Endothelial cell of umbilical vein (primary cell): ENCODE measurements at regions of chr14 and their contacts with region 1.

Region 1: GRCh38 chr14:24114536-24115450 is at the starts of genes DCAF11 and NRL:
- DNase-seq: peak; percentile 100
- H3K4me3 ChIP-seq: peak within 1 kb of the TSS; percentile 46 to 92 (median 84)
- H3K27ac ChIP-seq: peak within 1 kb of the TSS; percentile 88
- H3K4me1 ChIP-seq: peaks cover 13% of the 10 kb centered on the region
- H3K27me3 ChIP-seq: no peaks in the 10 kb centered on the region
- CTCF ChIP-seq: no peak
- POLR2A ChIP-seq: peak; percentile 39
- total RNA-seq, gene DCAF11: 32.1 and 38.5 TPM in 2 replicates
- total RNA-seq, gene NRL: 0.62 and 0.71 TPM in 2 replicates

Region 2: GRCh38 chr14:24013654-24014514 is 100.9 kb before region 1 on chr14:
- CTCF ChIA-PET with region 1: no interaction called
- POLR2A ChIA-PET with region 1: no interaction called
- dilution Hi-C with region 1: no loop called
- intact Hi-C with region 1: loop called (anchors 1 kb)
- DNase-seq: peak; percentile 82
- H3K4me3 ChIP-seq: no peak overlapping the region
- H3K27ac ChIP-seq: no peak overlapping the region
- H3K4me1 ChIP-seq: peaks cover 3% of the 10 kb centered on the region
- H3K27me3 ChIP-seq: peaks cover 0 to 2% of the 10 kb centered on the region in 2 experiments
- CTCF ChIP-seq: peak; percentile 64 to 72
- POLR2A ChIP-seq: no peak

Region 3: DNA sequence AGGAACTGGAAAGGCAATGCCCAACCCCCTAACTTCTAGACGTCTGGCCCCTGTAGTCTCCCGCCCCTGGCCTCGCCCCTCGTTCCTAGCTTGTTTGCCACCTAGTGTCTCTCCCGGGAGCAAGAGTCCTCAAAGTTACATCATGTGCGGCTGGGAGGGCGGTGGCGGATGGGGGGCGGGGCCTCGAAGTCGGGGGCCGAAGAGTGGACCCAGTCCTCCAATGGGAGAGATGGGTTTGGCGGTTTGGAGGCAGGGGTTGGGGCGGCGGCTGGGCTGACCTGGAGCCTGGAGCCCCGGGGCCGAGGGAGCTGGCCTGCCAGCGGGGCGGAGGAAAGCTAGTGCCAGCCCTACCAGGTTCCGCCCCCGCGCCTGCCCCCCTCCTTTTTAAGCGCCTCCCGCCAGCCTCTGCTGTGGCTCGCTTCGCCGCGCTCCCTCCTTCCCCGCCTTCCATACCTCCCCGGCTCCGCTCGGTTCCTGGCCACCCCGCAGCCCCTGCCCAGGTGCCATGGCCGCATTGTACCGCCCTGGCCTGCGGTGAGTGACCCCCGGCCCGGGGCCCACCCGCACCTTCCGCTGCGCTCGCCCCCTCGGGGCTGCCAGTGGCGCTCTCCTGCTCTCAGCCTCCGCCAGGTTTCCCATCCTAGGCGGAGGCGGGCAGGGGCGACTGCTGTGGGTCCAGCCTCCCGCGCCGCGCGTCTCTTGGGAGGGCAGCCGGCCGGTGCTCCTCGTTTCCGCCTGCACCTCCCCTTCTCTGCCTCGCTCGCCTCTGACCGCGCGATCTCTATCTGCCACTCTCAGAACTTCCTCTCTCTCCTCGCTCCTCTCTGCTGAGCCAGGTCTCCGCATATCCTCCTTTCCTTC is 20.7 kb before region 1 on chr14 and contains the start of gene PCK2:
- CTCF ChIA-PET with region 1: interaction called, 126 read pairs
- POLR2A ChIA-PET with region 1: interaction called, 11 read pairs
- dilution Hi-C with region 1: no loop called
- intact Hi-C with region 1: loop called (anchors 1 kb)
- DNase-seq: peak; percentile 72
- H3K4me3 ChIP-seq: peak within 1 kb of the TSS; percentile 71 to 82 (median 74)
- H3K27ac ChIP-seq: peak within 1 kb of the TSS; percentile 46
- H3K4me1 ChIP-seq: peaks cover 9% of the 10 kb centered on the region
- H3K27me3 ChIP-seq: no peaks in the 10 kb centered on the region
- CTCF ChIP-seq: peak in 1 of 2 donors; percentile 9
- POLR2A ChIP-seq: peak; percentile 77
- total RNA-seq, gene PCK2: 24.5 and 25.1 TPM in 2 replicates

Region 4: GRCh38 chr14:24141097-24141880 is 26.5 kb after region 1 on chr14 and contains the start of gene EMC9:
- CTCF ChIA-PET with region 1: interaction called, 11 read pairs
- POLR2A ChIA-PET with region 1: interaction called, 13 read pairs
- dilution Hi-C with region 1: no loop called
- intact Hi-C with region 1: loop called (anchors 1 kb)
- DNase-seq: peak; percentile 100
- H3K4me3 ChIP-seq: peak within 1 kb of the TSS; percentile 79 to 99 (median 81)
- H3K27ac ChIP-seq: peak within 1 kb of the TSS; percentile 42
- H3K4me1 ChIP-seq: peaks cover 24% of the 10 kb centered on the region
- H3K27me3 ChIP-seq: no peaks in the 10 kb centered on the region
- CTCF ChIP-seq: peak; percentile 28 to 53
- POLR2A ChIP-seq: peak; percentile 78
- total RNA-seq, gene EMC9: 19.0 and 21.8 TPM in 2 replicates

Region 5: GRCh38 chr14:24188251-24189058 is 73.7 kb after region 1 on chr14 and contains the start of gene IPO4:
- CTCF ChIA-PET with region 1: no interaction called
- POLR2A ChIA-PET with region 1: no interaction called
- dilution Hi-C with region 1: no loop called
- intact Hi-C with region 1: loop called (anchors 2 kb)
- DNase-seq: peak; percentile 94
- H3K4me3 ChIP-seq: peak within 1 kb of the TSS; percentile 31 to 65 (median 37)
- H3K27ac ChIP-seq: peak within 1 kb of the TSS; percentile 45
- H3K4me1 ChIP-seq: peaks cover 6% of the 10 kb centered on the region
- H3K27me3 ChIP-seq: no peaks in the 10 kb centered on the region
- CTCF ChIP-seq: no peak
- POLR2A ChIP-seq: peak; percentile 94
- total RNA-seq, gene IPO4: 52.6 and 66.5 TPM in 2 replicates

Region 6: DNA sequence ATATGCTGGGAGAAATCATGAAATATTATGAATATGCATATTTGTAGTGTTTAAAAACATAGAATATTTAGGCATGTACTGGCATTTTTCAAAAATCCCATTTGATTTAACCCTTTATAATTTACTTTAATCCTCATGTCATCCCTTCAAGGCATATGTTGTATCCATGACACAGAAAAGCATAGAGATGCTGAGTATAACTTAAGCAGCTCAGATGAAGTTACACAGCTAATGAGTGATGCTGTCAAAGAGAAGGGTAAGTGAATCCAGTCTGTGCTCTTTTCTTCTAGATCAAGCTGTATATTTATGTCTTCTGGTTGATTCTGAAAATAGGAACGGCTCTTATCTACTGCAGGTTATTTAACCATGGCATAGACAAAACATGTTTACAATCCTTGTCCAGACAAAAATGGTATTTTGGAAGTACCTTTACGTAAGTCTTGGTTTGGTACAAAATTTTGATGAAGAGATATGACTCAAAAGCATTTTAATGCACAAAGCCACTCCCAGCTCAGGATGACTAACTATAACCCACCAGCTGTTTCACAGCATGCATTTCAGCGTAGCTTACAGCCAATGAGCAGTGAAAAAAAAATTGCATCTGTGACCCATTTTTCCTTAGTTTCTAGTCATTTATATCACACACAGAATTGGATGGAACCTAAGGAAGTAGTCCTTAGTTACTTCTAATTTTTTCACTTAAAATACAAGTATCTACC is 733.5 kb after region 1 on chr14:
- CTCF ChIA-PET with region 1: no interaction called
- POLR2A ChIA-PET with region 1: no interaction called
- dilution Hi-C with region 1: no loop called
- intact Hi-C with region 1: no loop called
- DNase-seq: no peak
- H3K4me3 ChIP-seq: no peak overlapping the region
- H3K27ac ChIP-seq: no peak overlapping the region
- H3K4me1 ChIP-seq: no peaks in the 10 kb centered on the region
- H3K27me3 ChIP-seq: no peaks in the 10 kb centered on the region
- CTCF ChIP-seq: no peak
- POLR2A ChIP-seq: no peak